Cardiac septum (tissue), 1 donor: ENCODE measurements at regions of chr2 and their contacts with region 1.

Region 1: DNA sequence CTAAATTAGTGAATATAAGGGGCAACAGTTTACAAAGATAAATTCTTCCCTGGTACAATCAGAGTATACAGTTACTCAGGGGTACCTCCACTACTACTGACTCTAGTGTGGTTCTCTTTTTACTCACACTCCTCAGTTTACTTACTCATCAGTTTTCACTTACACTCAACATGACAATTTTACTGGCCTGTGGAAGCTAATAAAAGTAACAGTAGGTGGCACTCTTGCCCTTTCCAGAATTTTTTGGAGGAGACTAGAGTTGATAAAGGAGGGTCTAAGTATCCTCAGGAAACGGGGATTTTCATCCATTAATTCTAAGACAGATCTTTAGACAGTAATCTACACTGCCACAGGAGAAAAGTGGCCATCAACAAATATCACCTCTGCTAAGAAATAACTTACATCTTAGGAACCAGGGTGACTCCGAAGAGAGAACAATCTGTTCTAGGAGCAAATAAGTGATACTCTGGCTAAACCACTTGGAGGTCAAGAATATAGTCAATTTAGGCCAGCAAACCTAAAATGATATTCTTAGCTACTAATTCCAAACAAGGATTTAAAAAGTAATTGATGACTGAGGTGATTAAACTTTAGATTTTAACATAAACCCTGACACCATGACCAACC is 61.3 kb downstream of the ATL2 start:
- DNase-seq: no peak

Region 2: DNA sequence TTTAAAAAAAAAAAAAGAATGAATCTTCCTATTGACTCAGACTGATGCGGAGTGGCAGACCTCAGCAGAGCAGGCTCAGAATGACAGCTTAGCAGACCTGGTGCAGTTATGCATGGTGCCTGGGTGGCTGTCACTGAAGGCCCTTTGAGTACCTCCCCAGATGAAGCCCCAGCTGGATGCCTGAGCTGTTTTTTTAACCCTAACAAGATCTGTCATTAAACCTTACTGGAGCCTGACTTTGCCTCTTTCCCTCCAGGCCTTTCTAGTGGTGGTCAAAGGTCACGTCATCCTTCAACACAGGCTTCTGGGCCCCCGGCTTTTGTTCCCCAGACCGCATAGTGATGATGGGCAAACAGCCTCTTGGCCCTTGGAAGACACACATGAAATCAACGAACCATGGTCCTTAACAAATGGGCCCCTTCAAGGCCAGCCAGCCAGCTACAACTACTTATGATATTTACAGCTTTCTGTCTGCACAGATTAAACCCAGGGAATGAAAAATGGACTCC is 101.6 kb before region 1 on chr2:
- intact Hi-C with region 1: no loop called
- DNase-seq: no peak

Region 3: GRCh38 chr2:38377050-38377828 is 61.4 kb after region 1 on chr2 and contains the start of gene ATL2:
- intact Hi-C with region 1: loop called (anchors 5 kb)
- DNase-seq: peak; percentile 99
- total RNA-seq, gene ATL2: 27.1 TPM

Region 4: GRCh38 chr2:38444247-38444646 is 128.4 kb after region 1 on chr2:
- intact Hi-C with region 1: no loop called
- DNase-seq: no peak

Region 5: GRCh38 chr2:38474715-38475566 is 159.1 kb after region 1 on chr2:
- intact Hi-C with region 1: loop called (anchors 5 kb)
- DNase-seq: no peak

Region 6: DNA sequence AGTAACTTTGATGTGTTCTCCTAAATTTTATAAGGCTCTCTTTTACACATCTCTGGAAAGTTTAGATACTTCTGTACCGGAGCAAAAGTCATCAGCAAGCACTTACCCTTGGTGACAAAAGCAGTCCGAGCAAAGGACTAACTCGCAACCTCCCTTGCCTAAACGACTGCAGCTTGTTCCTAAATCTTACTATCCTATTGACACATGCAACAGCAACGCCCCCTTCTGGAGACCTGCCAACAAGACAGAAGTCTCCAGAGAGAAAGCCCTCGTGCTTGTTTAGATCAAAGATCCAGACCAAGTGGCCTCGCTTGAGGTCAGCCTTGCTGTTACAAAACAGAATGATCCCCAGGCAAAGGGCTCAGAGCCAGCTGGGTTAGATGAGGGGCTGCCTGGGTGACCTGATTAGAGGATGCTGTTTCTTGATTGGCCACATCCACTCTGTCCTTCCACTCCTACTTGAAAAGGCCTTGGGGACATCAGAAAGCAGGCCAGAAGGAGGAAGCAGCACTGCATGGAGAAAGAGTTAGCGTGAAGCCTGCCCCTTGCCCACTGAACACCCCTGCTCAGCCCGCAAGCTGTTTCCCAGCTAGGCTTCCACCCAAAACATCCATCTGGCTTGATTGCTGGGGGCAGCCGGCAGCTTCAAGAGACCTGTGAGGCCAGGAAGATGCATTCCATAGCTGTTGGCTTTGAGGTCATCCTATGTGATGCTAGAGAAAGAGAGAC is 192.7 kb after region 1 on chr2:
- intact Hi-C with region 1: loop called (anchors 5 kb)
- DNase-seq: peak; percentile 82

Region 7: GRCh38 chr2:38728694-38729093 is 412.9 kb after region 1 on chr2:
- intact Hi-C with region 1: loop called (anchors 5 kb)
- DNase-seq: no peak

Region 8: GRCh38 chr2:38740851-38741731 is 425.3 kb after region 1 on chr2:
- intact Hi-C with region 1: loop called (anchors 5 kb)
- DNase-seq: no peak